ENCODE measurements at regions of chr1 and their contacts with region 1.

Region 1: GRCh38 chr1:87120779-87121178 is 206.3 kb downstream of the HS2ST1 start:
- DNase-seq: no peak
- ATAC-seq: no peak

Region 2: GRCh38 chr1:86825319-86825718 is 295.5 kb before region 1 on chr1:
- intact Hi-C with region 1: no loop called
- DNase-seq: no peak
- ATAC-seq: no peak

Region 3: DNA sequence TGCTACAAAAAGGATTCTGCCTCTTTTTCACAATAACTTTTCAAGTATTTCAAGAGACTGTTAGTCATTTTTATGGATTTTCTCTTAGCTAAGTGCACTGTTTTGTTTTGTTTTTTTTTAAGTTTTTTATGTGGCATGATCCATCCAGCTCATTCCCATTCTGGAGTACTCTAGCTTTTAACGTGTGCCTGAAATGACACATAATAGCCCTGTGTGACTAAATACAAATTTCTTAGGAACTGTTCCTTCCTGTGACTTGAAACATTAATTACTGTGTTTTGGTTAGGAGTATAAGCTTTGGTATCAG is 62.5 kb before region 1 on chr1:
- intact Hi-C with region 1: no loop called
- DNase-seq: no peak
- ATAC-seq: peak in 1 of 2 donors; percentile 25

Region 4: DNA sequence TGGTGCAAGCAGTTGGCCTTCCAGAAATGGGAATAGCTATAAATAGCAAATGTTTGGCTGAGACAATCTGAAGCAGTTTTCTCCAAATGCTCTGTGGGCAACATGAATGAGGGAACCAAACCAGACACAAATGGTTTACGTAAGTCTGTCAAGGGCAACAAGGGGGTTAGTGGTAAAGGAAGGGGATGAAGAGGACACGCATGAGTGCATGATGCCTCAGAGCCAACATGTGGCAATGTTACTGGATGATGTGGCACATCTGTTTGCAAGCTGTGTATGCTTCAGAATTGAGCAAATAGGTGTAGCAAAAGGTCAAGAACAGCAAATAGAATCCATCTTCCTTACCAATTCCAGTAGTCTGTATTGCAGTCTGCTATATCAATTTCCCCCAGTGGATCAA is 131.6 kb after region 1 on chr1:
- intact Hi-C with region 1: no loop called
- DNase-seq: no peak
- ATAC-seq: no peak

Region 5: DNA sequence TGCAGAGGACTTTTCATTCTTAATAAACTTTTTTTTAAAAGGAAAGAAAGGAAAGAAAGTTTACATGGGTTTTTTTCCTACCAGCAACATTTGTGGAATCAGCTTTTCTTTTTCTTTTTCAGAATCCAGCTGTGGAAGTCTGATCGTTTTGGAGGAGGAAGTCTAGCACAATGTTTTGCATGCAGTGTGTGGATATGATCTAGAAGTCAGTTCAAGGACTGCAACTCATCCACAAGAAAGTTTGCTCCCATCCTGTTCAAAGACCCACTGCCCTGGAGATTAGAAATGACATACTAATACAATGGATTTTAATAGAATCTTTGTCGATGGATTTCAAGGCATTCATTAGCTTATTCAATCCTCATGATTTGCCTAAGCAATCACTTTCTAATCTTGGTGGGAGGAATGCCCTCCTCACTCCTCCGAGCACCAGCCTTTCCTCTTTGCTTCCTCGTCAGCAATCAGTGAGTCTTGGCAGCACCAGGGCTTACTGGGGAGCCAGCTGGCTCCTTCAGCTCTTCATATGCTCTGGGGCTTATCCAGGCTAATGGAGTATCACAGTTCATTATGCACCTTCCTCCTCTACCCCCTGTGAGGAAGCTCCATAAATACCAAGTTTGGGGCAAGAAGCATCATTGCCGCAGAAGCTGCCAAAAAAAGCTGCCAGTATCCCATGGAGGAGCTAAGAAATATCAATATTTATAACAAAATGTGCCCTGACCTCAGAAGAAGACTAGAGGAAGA is 1171.0 kb after region 1 on chr1:
- intact Hi-C with region 1: loop called in 1 of 2 experiments (anchors 10 kb)
- DNase-seq: no peak
- ATAC-seq: no peak

Measured in left cardiac atrium (tissue), 4 donors.